AG04450 (cell line): ENCODE measurements at regions of chr16 and their contacts with region 1.

Region 1: GRCh38 chr16:75062135-75062975 is 54.2 kb downstream of the LDHD start:
- DNase-seq: no peak
- H3K4me3 ChIP-seq: no peak overlapping the region
- H3K27ac ChIP-seq: peak overlapping the region; percentile 61
- H3K27me3 ChIP-seq: no peaks in the 10 kb centered on the region
- CTCF ChIP-seq: 0 out of 2 replicates have a peak, but pooled peaks have one; percentile 17

Region 2: GRCh38 chr16:75087375-75087979 is 25.1 kb after region 1 on chr16:
- CTCF ChIA-PET with region 1: no interaction called
- POLR2A ChIA-PET with region 1: interaction called, 15 read pairs
- DNase-seq: peak; percentile 87
- H3K4me3 ChIP-seq: peak overlapping the region; percentile 46
- H3K27ac ChIP-seq: peak overlapping the region; percentile 97
- H3K27me3 ChIP-seq: no peaks in the 10 kb centered on the region
- CTCF ChIP-seq: no peak